HCT116 (cell line): ENCODE measurements at regions of chr7 and their contacts with region 1.

Region 1: GRCh38 chr7:16098585-16099179 is 322.7 kb downstream of the CRPPA start:
- DNase-seq: peak; percentile 32
- ATAC-seq: peak; percentile 78
- H3K4me3 ChIP-seq: no peak overlapping the region
- H3K27ac ChIP-seq: no peak overlapping the region
- H3K4me1 ChIP-seq: peaks cover 0 to 6% of the 10 kb centered on the region in 2 experiments; a peak in 3 of 4 replicates
- H3K27me3 ChIP-seq: no peaks in the 10 kb centered on the region
- CTCF ChIP-seq: peak; percentile 78 to 93 (median 78)
- POLR2A ChIP-seq: no peak
- RAD21 ChIP-seq: peak; percentile 74

Region 2: DNA sequence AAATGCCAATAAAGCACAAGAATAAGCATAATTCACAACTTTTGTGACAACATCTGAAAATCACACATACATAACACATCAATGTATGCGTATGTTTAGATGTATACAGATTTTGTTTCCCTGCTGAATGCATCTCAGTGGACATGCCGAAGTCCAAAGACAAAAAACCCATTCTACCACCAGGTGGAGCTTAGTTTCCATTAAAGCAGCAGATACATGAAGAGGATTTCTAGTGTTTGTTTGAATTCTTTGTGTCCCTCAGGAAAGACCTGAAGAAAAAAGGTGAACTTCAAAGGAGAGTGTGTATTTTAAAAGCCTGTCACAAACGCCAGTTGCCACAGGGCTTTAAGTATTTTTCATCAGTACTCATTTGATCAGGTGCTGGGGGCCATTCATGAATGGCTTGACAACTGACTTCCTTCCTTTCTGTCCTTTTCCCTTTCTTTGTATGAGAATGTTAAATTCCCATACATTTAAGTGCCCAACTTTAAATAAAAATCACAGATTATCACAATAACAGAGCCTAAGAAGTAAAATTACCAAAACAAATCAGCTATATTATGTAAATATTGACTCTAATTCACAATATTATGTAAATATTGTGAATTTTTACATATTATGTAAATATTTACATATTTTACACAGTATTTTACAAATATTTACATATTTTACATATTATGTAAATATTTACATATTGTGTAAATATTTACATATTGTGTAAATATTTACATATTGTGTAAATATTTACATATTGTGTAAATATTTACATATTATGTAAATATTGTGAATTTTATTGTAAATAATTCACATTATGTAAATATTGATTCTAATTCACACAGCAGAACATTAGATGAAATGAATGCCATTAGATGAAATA is 20.4 kb before region 1 on chr7:
- CTCF ChIA-PET with region 1: interaction called, 30 read pairs
- POLR2A ChIA-PET with region 1: no interaction called
- RAD21 ChIA-PET with region 1: interaction called in 1 of 2 experiments, 3 read pairs
- intact Hi-C with region 1: loop called (anchors 1 kb)
- DNase-seq: peak; percentile 69
- ATAC-seq: peak; percentile 88
- H3K4me3 ChIP-seq: no peak overlapping the region
- H3K27ac ChIP-seq: peak overlapping the region; percentile 27; the same call in 1 of the 2 replicates
- H3K4me1 ChIP-seq: peaks cover 4 to 11% of the 10 kb centered on the region in 2 experiments
- H3K27me3 ChIP-seq: no peaks in the 10 kb centered on the region
- CTCF ChIP-seq: peak; percentile 51 to 78 (median 58); a peak in 5 of 6 replicates
- POLR2A ChIP-seq: no peak
- RAD21 ChIP-seq: peak; percentile 82

Region 3: DNA sequence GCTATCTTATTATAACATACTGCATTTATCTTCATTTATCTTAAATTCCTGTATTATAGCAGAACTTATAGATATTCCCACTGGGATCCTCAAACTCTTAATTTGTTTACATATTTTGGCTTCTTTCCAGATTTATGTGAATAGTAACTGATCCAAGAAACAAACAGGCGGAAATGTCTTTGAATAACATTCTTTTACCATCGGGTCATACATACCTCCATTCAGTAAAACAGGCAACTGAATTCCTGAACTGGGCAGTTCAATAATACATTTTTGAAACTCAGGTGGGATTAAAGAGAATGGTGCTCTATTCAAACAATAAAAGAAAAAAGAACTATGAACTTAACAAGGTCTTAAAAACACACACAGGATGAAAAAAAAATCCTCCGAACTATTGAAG is 14.8 kb before region 1 on chr7:
- CTCF ChIA-PET with region 1: interaction called, 30 read pairs
- POLR2A ChIA-PET with region 1: no interaction called
- RAD21 ChIA-PET with region 1: no interaction called
- intact Hi-C with region 1: no loop called
- DNase-seq: peak; percentile 56
- ATAC-seq: peak; percentile 89
- H3K4me3 ChIP-seq: peak overlapping the region in 1 of 2 experiments; percentile 4; a peak in 2 of 4 replicates
- H3K27ac ChIP-seq: peak overlapping the region; percentile 67; the same call in 1 of the 2 replicates
- H3K4me1 ChIP-seq: peaks cover 19 to 32% of the 10 kb centered on the region in 2 experiments
- H3K27me3 ChIP-seq: no peaks in the 10 kb centered on the region
- CTCF ChIP-seq: no peak
- POLR2A ChIP-seq: no peak
- RAD21 ChIP-seq: no peak